ENCODE measurements at regions of chr5 and their contacts with region 1.

Region 1: DNA sequence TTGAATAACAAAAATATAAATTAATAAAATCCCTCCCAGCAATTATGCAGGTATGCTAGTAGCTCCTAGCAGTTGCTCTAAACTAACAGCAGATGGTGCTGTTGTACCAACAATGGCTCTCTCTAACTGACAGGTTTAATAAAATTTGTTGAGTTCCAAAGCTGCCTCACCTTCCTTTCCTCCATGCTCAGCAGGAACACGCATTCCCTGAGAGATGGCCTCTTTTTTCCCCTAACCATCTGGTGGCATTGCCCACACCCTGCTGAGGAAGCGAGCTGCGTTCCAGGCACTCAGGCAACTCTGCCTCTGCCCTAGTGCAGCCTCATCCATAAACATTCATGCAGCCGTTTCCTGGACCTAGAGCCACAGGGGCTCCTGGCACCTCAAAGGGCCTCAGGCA is 106.2 kb downstream of the KLHL3 start:
- DNase-seq: peak; percentile 60
- H3K4me3 ChIP-seq: no peak overlapping the region
- H3K27ac ChIP-seq: no peak overlapping the region
- H3K4me1 ChIP-seq: peaks cover 3% of the 10 kb centered on the region
- H3K27me3 ChIP-seq: no peaks in the 10 kb centered on the region
- CTCF ChIP-seq: peak; percentile 62 to 76
- POLR2A ChIP-seq: no peak

Region 2: GRCh38 chr5:137641148-137641547 is 11.5 kb after region 1 on chr5:
- CTCF ChIA-PET with region 1: interaction called, 59 read pairs
- POLR2A ChIA-PET with region 1: no interaction called
- dilution Hi-C with region 1: no loop called
- intact Hi-C with region 1: no loop called
- DNase-seq: no peak
- H3K4me3 ChIP-seq: no peak overlapping the region
- H3K27ac ChIP-seq: no peak overlapping the region
- H3K4me1 ChIP-seq: no peaks in the 10 kb centered on the region
- H3K27me3 ChIP-seq: no peaks in the 10 kb centered on the region
- CTCF ChIP-seq: no peak
- POLR2A ChIP-seq: no peak

Region 3: GRCh38 chr5:137695651-137696428 is 66.2 kb after region 1 on chr5:
- CTCF ChIA-PET with region 1: interaction called, 9 read pairs
- POLR2A ChIA-PET with region 1: no interaction called
- dilution Hi-C with region 1: no loop called
- intact Hi-C with region 1: loop called (anchors 2 kb)
- DNase-seq: peak; percentile 98
- H3K4me3 ChIP-seq: no peak overlapping the region
- H3K27ac ChIP-seq: peak overlapping the region; percentile 85
- H3K4me1 ChIP-seq: peaks cover 45% of the 10 kb centered on the region
- H3K27me3 ChIP-seq: no peaks in the 10 kb centered on the region
- CTCF ChIP-seq: peak; percentile 61 to 70
- POLR2A ChIP-seq: no peak

Region 4: DNA sequence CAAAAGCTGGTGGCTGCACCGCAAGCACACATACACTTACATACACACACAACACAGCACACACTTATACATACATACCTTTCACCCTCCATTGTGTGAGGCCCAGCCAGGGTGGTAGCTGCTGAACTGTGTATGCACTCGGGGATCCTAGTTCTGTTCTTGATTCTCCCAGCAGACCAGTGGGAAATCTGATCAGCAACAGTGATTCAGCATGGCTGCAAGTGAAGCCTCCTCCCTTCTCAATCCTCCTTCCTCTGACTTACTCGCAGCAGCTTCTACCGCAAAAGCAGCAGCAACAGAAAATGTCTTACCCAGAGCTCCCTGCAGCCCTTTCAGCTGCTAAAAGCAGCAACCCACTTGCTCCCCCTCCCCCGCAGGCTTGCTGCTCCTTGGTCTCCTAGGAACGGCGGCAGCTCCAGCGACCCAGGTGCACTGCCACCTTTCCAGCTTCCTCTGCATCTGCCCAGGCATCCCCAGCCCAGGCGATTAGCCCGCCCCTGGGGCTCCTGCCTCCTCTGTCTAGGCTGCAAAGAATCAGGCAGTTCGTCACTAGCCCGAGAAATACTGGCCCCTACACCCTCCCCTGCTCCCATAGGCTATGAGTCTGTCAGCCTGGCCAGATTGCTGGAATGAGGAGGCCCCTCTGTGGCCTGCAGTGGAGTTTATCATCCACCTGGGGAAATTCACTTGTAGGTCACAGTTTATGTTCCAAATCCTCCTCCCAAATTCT is 106.1 kb after region 1 on chr5 and contains the start of gene KLHL3:
- CTCF ChIA-PET with region 1: interaction called, 375 read pairs
- POLR2A ChIA-PET with region 1: no interaction called
- dilution Hi-C with region 1: no loop called
- intact Hi-C with region 1: no loop called
- DNase-seq: peak; percentile 81
- H3K4me3 ChIP-seq: peak within 1 kb of the TSS; percentile 56 to 74 (median 64)
- H3K27ac ChIP-seq: peak within 1 kb of the TSS; percentile 76
- H3K4me1 ChIP-seq: peaks cover 40% of the 10 kb centered on the region
- H3K27me3 ChIP-seq: no peaks in the 10 kb centered on the region
- CTCF ChIP-seq: peak; percentile 16 to 26
- POLR2A ChIP-seq: peak; percentile 71
- total RNA-seq, gene KLHL3: 13.6 and 13.9 TPM in 2 replicates

Region 5: GRCh38 chr5:137822158-137822764 is 192.6 kb after region 1 on chr5:
- CTCF ChIA-PET with region 1: interaction called, 9 read pairs
- POLR2A ChIA-PET with region 1: no interaction called
- dilution Hi-C with region 1: no loop called
- intact Hi-C with region 1: loop called (anchors 1 kb)
- DNase-seq: peak; percentile 31
- H3K4me3 ChIP-seq: no peak overlapping the region
- H3K27ac ChIP-seq: no peak overlapping the region
- H3K4me1 ChIP-seq: no peaks in the 10 kb centered on the region
- H3K27me3 ChIP-seq: peaks cover 10 to 19% of the 10 kb centered on the region in 2 experiments
- CTCF ChIP-seq: peak; percentile 17 to 51
- POLR2A ChIP-seq: no peak

Region 6: GRCh38 chr5:138128334-138128733 is 498.7 kb after region 1 on chr5:
- CTCF ChIA-PET with region 1: interaction called, 9 read pairs
- POLR2A ChIA-PET with region 1: no interaction called
- dilution Hi-C with region 1: no loop called
- intact Hi-C with region 1: loop called (anchors 1 kb)
- DNase-seq: peak; percentile 70
- H3K4me3 ChIP-seq: no peak overlapping the region
- H3K27ac ChIP-seq: no peak overlapping the region
- H3K4me1 ChIP-seq: peaks cover 8% of the 10 kb centered on the region
- H3K27me3 ChIP-seq: no peaks in the 10 kb centered on the region
- CTCF ChIP-seq: no peak
- POLR2A ChIP-seq: no peak